T-cell (primary cell): ENCODE measurements at regions of chr3 and their contacts with region 1.

Region 1: DNA sequence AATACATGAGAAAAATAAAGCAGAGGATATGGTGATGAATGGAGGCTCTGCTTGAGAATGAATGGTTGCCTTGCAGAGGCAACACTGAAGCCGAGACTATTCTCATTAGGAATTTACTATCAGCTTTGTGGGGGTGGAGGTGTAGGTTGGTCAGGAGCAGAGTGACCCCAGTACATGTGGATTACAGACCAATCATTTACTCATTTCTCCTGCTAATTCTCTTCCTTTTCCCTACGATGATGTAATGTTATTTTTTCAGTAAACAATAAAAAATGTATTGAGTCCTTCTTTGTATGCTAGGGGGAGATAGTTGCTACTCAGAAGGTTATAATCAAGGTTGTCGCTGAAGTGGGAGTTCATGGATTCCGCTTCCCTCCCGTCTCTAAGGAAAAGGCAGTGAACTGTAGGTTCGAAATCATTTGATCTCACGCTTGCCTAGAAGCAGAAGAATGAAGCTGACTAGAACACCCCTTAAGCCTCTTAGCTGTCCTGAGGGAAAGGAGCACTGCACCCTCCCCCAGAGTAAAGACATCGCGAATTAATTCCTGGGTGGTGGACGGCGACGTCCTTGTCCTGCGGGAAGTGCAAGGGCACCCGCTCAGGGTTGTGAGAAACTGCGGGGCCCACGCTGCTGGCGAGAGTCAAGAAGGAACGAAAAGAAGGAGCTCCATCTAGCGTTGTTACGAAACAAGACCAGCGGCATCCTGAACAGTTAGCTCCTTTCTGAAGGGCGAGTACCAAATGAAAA is 213.2 kb upstream of the PFN2 start:
- DNase-seq: peak in 32 of 35 experiments; percentile 1 to 66 (median 21)
- ATAC-seq: peak; percentile 78 to 83 (median 81)
- H3K4me3 ChIP-seq: peak overlapping the region in 1 of 2 donors; percentile 29
- H3K4me3 Mint-ChIP-seq: no peak overlapping the region
- H3K27ac ChIP-seq: no peak overlapping the region
- H3K27ac Mint-ChIP-seq: no peak overlapping the region
- H3K4me1 ChIP-seq: peaks cover 0 to 7% of the 10 kb centered on the region in 2 experiments
- H3K4me1 Mint-ChIP-seq: no peaks in the 10 kb centered on the region
- H3K27me3 ChIP-seq: peaks cover 0 to 3% of the 10 kb centered on the region in 2 experiments
- H3K27me3 Mint-ChIP-seq: peaks cover 12 to 21% of the 10 kb centered on the region in 2 donors

Region 2: DNA sequence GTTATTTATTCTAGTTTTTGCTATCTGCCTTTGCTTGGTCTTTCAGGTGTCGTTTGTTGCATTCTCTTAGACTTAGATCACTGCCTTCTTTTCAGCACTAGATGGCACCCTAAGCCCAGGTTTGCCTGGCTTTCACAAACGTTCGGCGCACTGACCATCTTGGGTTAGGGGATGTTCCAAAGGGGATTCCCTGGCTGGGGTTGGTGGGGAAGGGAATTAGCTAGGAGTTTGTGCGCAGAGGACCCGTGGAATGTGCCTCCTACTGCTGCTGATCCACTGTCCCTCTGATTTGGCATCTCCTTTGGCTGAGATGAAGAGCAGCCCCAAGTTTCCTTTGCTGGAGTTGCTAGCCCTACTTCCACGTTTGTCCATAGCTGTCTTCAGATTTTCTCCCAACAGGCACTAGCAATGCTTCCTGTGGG is 247.0 kb before region 1 on chr3:
- CTCF ChIA-PET with region 1: interaction called, 3 to 10 read pairs
- POLR2A ChIA-PET with region 1: no interaction called
- DNase-seq: peak in 31 of 35 experiments; percentile 2 to 67 (median 11)
- ATAC-seq: peak in 1 of 4 experiments; percentile 60
- H3K4me3 ChIP-seq: no peak overlapping the region
- H3K4me3 Mint-ChIP-seq: no peak overlapping the region
- H3K27ac ChIP-seq: no peak overlapping the region
- H3K27ac Mint-ChIP-seq: no peak overlapping the region
- H3K4me1 ChIP-seq: peaks cover 0 to 3% of the 10 kb centered on the region in 2 experiments
- H3K4me1 Mint-ChIP-seq: peaks cover 26 to 35% (median 29%) of the 10 kb centered on the region in 3 donors
- H3K27me3 ChIP-seq: no peaks in the 10 kb centered on the region
- H3K27me3 Mint-ChIP-seq: no peaks in the 10 kb centered on the region

Region 3: DNA sequence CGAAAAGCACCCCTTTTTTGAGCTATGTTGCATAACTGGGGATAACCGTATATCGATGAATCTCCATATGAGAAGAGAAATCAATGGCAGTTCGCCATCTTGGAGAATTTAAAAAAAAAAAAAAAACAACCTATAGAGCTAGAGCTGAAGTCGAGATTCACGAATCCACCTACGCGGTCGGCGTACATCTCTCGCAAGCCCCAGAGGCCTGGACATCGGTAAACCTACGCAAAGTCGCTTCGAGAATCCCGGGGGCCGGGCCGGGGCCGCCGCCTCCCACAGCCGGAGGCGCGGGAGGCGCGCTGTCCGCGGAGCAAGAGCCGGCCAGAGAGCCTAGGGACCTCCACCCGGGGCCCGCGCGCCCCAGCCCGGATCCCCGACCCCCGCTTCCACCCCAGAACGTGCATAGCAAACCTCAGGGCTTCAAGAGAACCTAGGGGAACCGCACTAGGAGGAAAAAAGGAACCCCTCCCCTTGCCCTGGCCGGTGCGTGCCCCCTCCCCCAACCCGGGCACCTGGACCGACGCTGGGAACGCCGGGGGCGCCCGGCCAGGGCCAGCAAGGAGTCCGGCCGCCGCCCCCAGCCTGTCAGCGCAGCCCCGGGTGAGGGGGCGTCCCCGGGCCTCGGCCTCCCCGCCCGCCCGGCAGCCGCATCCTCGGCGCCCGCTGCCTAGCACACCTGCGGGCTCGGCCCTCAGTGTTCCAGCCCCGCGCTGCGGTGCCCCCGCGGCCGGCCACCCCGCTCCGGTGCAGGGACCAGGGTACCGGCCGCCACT is 213.7 kb before region 1 on chr3:
- CTCF ChIA-PET with region 1: interaction called, 14 to 36 read pairs
- POLR2A ChIA-PET with region 1: interaction called in 1 of 2 experiments, 4 read pairs
- DNase-seq: peak; percentile 50 to 88 (median 74)
- ATAC-seq: peak; percentile 57 to 63 (median 62)
- H3K4me3 ChIP-seq: peak overlapping the region; percentile 63 to 77
- H3K4me3 Mint-ChIP-seq: peak overlapping the region; percentile 85 to 95 (median 90)
- H3K27ac ChIP-seq: no peak overlapping the region
- H3K27ac Mint-ChIP-seq: peak overlapping the region; percentile 7 to 12
- H3K4me1 ChIP-seq: peaks cover 4 to 10% of the 10 kb centered on the region in 2 experiments
- H3K4me1 Mint-ChIP-seq: peaks cover 21 to 25% (median 24%) of the 10 kb centered on the region in 3 donors
- H3K27me3 ChIP-seq: peaks cover 5 to 10% of the 10 kb centered on the region in 2 experiments
- H3K27me3 Mint-ChIP-seq: peaks cover 16% of the 10 kb centered on the region in 2 donors

Region 4: GRCh38 chr3:150146991-150147761 is 36.7 kb before region 1 on chr3:
- CTCF ChIA-PET with region 1: no interaction called
- POLR2A ChIA-PET with region 1: no interaction called
- DNase-seq: no peak
- ATAC-seq: no peak
- H3K4me3 ChIP-seq: no peak overlapping the region
- H3K4me3 Mint-ChIP-seq: no peak overlapping the region
- H3K27ac ChIP-seq: no peak overlapping the region
- H3K27ac Mint-ChIP-seq: no peak overlapping the region
- H3K4me1 ChIP-seq: no peaks in the 10 kb centered on the region
- H3K4me1 Mint-ChIP-seq: no peaks in the 10 kb centered on the region
- H3K27me3 ChIP-seq: no peaks in the 10 kb centered on the region
- H3K27me3 Mint-ChIP-seq: peaks cover 18 to 29% of the 10 kb centered on the region in 2 donors